Panc1 (cell line): ENCODE measurements at regions of chr4 and their contacts with region 1.

Region 1: DNA sequence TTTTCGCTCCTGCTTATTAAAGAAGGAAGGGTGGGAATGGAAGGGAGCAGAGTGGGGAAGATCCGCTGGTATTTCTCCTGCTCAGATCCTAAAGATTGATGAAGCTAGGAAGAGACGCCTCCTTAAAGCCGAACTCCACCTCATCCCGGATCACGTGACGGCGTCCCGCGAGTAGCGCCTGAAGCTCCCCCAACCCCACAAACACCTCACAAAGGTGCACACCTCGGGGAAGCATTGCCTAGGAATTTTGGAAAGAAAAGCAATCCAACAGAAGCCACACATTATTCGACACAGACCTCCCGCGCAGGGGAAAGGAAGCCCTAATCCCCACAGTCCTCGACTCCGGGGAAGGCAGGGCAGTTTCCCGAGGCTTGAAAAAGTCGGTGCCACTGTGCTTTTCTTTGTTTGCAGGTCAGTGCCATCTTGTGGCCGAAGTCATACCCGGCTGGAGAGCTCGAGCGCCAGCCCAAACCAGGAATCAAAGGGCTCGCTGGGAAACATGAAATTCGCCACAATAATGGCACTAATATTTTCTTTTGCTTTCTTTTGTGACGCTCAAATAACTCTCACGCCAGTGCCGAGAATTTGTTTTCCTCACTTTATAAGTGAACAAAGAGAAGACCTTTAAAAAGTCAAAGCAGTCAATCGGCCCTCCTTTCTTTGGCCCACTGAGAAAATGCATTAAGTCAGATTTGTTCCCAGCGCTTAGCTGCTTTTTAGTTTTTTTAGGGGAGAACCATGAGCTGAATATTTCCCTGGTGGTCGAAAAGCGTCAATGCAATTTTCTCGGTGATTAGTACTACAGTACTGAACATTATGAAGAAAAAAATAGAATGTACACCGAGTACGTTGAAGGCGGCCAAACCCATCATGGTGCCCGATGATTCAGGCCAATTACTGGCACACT is at the start of gene NPY1R:
- DNase-seq: peak; percentile 32
- ATAC-seq: peak; percentile 95
- H3K4me3 ChIP-seq: peak within 1 kb of the TSS; percentile 41 to 72
- H3K27ac ChIP-seq: no peak within 1 kb of the TSS
- H3K4me1 ChIP-seq: no peaks in the 10 kb centered on the region
- H3K27me3 ChIP-seq: no peaks in the 10 kb centered on the region; the same call in none of the 2 replicates
- CTCF ChIP-seq: peak; percentile 78
- total RNA-seq, gene NPY1R: not detected

Region 2: DNA sequence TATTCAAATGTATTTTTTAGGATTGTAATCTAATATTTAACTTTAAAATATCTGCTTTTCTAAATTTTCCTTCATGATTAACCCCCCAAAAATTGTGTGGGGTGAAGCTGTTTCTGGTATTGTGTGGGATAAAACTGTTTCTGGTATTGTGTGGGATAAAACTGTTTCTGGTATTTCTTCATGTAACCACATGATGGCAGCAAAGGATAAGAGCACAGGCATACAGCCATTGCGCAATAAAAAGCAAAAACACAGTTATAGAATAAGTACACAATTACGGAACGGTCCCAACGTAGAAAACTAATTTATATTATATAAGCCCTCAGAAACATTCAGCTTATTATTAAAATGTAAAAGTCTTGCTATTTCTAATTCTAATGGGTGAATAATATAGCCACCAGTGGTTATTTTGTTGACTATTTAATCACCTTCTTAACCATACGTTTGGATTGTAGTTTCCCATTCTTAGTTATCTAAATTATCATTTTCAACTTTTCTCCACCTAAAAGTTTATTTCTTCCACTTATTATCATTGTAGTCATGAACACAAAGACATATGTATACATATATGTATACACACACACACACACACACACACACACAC is 835.1 kb before region 1 on chr4:
- CTCF ChIA-PET with region 1: interaction called, 6 read pairs
- POLR2A ChIA-PET with region 1: no interaction called
- in situ Hi-C with region 1: no loop called
- intact Hi-C with region 1: loop called (anchors 2 kb)
- DNase-seq: no peak
- ATAC-seq: peak; percentile 68; the same call in 1 of the 2 replicates
- H3K4me3 ChIP-seq: no peak overlapping the region
- H3K27ac ChIP-seq: no peak overlapping the region
- H3K4me1 ChIP-seq: no peaks in the 10 kb centered on the region
- H3K27me3 ChIP-seq: no peaks in the 10 kb centered on the region
- CTCF ChIP-seq: peak; percentile 71; the same call in 1 of the 2 replicates

Region 3: GRCh38 chr4:163048447-163048846 is 284.3 kb before region 1 on chr4:
- CTCF ChIA-PET with region 1: no interaction called
- POLR2A ChIA-PET with region 1: no interaction called
- in situ Hi-C with region 1: no loop called
- intact Hi-C with region 1: loop called (anchors 5 kb)
- DNase-seq: no peak
- ATAC-seq: no peak
- H3K4me3 ChIP-seq: no peak overlapping the region
- H3K27ac ChIP-seq: no peak overlapping the region
- H3K4me1 ChIP-seq: no peaks in the 10 kb centered on the region
- H3K27me3 ChIP-seq: no peaks in the 10 kb centered on the region
- CTCF ChIP-seq: peak; percentile 50

Region 4: GRCh38 chr4:163113921-163114713 is 218.6 kb before region 1 on chr4:
- CTCF ChIA-PET with region 1: no interaction called
- POLR2A ChIA-PET with region 1: no interaction called
- in situ Hi-C with region 1: no loop called
- intact Hi-C with region 1: loop called (anchors 2 kb)
- DNase-seq: no peak
- ATAC-seq: no peak
- H3K4me3 ChIP-seq: no peak overlapping the region
- H3K27ac ChIP-seq: no peak overlapping the region
- H3K4me1 ChIP-seq: no peaks in the 10 kb centered on the region
- H3K27me3 ChIP-seq: no peaks in the 10 kb centered on the region
- CTCF ChIP-seq: no peak

Region 5: DNA sequence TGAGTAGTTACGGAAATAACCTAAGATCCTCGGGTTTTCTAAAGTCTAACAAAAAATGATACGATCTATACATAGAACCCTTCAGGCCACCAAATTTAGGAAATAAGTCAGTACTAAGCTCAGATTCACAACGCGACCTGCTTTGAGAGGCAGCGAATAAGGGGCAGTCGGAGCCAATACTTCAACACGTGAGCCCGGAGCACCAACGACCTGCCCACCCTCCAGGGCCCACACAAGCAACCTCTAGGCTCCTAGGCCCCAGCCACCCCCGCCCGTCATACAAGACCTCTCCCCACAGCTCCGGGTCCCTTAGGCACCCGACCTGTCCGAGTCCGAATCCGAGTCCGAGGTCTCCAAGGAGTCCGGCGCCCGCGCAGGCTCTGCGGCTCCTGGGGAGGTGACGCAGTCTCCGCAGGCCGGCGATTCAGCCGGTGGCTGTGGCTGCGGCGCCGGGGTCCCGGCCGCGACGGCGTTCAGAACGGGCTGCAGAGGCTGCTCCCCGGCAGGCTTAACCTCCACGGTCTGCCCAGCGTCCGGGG is 166.6 kb before region 1 on chr4:
- CTCF ChIA-PET with region 1: no interaction called
- POLR2A ChIA-PET with region 1: interaction called, 3 read pairs
- in situ Hi-C with region 1: no loop called
- intact Hi-C with region 1: loop called (anchors 5 kb)
- DNase-seq: no peak
- ATAC-seq: peak; percentile 78
- H3K4me3 ChIP-seq: peak overlapping the region; percentile 81 to 83
- H3K27ac ChIP-seq: peak overlapping the region; percentile 83
- H3K4me1 ChIP-seq: no peaks in the 10 kb centered on the region; the same call in 1 of the 2 replicates
- H3K27me3 ChIP-seq: no peaks in the 10 kb centered on the region
- CTCF ChIP-seq: no peak

Region 6: DNA sequence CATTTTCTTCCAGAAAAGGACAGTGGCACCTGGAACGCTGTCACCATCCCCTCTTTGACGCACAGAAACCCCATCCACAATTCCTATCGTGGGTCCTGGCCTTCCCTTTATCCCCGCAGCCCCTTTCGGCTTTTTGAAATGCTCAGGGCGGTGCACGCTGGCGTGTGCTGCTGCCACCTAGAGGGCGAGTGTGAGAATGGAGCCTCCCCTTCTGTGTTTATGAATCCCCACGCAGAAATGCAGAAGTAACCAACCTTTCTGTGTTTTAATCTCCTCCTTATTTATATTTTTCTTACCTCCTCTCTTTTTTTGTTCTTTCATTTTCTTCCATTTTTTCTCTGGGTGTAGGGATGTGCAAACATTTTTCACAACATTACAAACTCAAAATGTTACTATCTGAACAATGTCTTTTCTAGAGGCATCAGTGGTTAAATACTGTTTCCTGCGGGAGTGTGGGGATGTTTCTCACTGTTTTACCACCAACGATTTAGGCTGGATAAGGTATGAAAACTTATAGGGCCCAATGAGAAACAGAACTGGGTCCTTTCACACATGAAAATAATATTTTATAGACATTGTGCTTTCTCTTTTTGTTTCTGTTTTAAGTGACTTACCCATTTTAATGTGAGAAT is 211.8 kb after region 1 on chr4:
- CTCF ChIA-PET with region 1: no interaction called
- POLR2A ChIA-PET with region 1: no interaction called
- in situ Hi-C with region 1: no loop called
- intact Hi-C with region 1: loop called (anchors 5 kb)
- DNase-seq: no peak
- ATAC-seq: peak; percentile 77
- H3K4me3 ChIP-seq: peak overlapping the region; percentile 31 to 53
- H3K27ac ChIP-seq: no peak overlapping the region
- H3K4me1 ChIP-seq: no peaks in the 10 kb centered on the region; the same call in 1 of the 2 replicates
- H3K27me3 ChIP-seq: no peaks in the 10 kb centered on the region
- CTCF ChIP-seq: peak; percentile 90